BJ (cell line): ENCODE measurements at regions of chr4 and their contacts with region 1.

Region 1: GRCh38 chr4:1693129-1693896 is 9.2 kb upstream of the FAM53A start:
- DNase-seq: no peak
- H3K4me3 ChIP-seq: no peak overlapping the region
- H3K27me3 ChIP-seq: no peaks in the 10 kb centered on the region
- CTCF ChIP-seq: peak; percentile 96

Region 2: GRCh38 chr4:1712216-1713002 is 19.1 kb after region 1 on chr4 and contains the start of gene SLBP:
- CTCF ChIA-PET with region 1: interaction called, 167 read pairs
- POLR2A ChIA-PET with region 1: interaction called, 3 read pairs
- DNase-seq: peak; percentile 56
- H3K4me3 ChIP-seq: peak within 1 kb of the TSS; percentile 74
- H3K27me3 ChIP-seq: no peaks in the 10 kb centered on the region
- CTCF ChIP-seq: no peak
- polyA plus RNA-seq, gene SLBP: 36.9 and 56.7 TPM in 2 replicates

Region 3: DNA sequence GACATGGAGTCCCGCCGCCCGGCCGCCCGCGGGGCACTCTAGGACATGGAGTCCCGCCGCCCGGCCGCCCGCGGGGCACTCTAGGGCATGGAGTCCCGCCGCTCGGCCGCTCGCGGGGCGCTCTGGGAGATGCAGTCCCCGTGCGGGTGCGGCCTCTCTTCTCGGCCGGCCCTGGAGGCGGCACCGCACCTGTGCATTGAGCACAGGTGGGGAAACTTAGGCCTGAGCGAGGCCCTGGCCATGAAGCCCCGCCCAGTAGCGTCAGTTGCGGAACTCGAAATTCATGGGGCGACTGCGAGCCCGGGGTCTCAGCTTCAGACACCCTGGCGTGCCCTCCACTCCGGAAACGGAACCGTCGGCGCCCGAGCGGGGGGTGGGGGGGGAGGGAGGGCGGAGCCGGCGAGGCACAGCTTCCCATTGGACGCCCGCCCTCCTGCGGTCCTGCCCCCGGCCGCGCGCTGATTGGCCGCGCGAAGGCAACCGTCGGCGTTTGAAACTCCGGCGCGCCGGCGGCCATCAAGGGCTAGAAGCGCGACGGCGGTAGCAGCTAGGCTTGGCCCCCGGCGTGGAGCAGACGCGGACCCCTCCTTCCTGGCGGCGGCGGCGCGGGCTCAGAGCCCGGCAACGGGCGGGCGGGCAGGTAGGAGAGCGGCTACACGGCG is 27.8 kb after region 1 on chr4 and contains the starts of genes TACC3 and TMEM129:
- CTCF ChIA-PET with region 1: interaction called, 167 read pairs
- POLR2A ChIA-PET with region 1: no interaction called
- DNase-seq: no peak
- H3K4me3 ChIP-seq: peak within 1 kb of the TSS; percentile 82
- H3K27me3 ChIP-seq: no peaks in the 10 kb centered on the region
- CTCF ChIP-seq: no peak
- polyA plus RNA-seq, gene TACC3: 13.8 and 24.0 TPM in 2 replicates
- polyA plus RNA-seq, gene TMEM129: 23.7 and 33.8 TPM in 2 replicates

Region 4: GRCh38 chr4:1726146-1726934 is 33.0 kb after region 1 on chr4:
- CTCF ChIA-PET with region 1: interaction called, 167 read pairs
- POLR2A ChIA-PET with region 1: no interaction called
- DNase-seq: no peak
- H3K4me3 ChIP-seq: no peak overlapping the region
- H3K27me3 ChIP-seq: no peaks in the 10 kb centered on the region
- CTCF ChIP-seq: peak; percentile 98

Region 5: DNA sequence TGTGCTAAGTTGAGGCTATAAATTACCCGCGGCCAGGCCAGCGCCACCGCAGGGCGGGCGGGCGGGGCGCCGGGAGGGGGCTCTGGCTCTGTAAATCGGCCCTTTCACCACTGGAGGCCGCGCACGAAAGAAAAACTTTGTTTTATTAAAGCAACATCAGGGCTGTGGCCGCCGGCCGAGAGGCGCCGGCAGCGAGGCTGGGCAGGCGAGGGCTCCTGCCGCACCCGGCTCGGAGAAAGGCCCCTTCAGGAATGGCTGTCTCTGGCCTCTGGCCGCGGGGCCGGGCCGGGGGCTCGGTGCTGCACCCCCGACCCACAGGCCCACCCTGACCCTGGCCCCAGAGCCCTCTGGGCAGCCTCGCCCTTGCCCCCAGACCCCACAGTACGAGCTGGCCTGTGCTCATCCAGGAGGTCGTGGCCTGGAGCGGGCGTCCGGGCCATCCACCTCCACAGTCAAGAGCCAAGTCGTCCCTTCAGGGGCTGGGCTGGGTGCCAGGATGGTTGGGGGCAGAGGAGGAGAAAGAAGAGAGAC is 70.3 kb after region 1 on chr4:
- CTCF ChIA-PET with region 1: no interaction called
- POLR2A ChIA-PET with region 1: no interaction called
- DNase-seq: no peak
- H3K4me3 ChIP-seq: peak overlapping the region; percentile 9; the same call in 1 of the 2 replicates
- H3K27me3 ChIP-seq: no peaks in the 10 kb centered on the region; the same call in 1 of the 2 replicates
- CTCF ChIP-seq: no peak